ENCODE measurements at regions of chr17 and their contacts with region 1.

Region 1: GRCh38 chr17:48047741-48048383 is at the start of gene NFE2L1:
- DNase-seq: peak; percentile 86 to 99 (median 98)
- ATAC-seq: peak; percentile 98
- H3K4me3 ChIP-seq: peak within 1 kb of the TSS; percentile 78
- H3K4me3 Mint-ChIP-seq: peak within 1 kb of the TSS; percentile 79 to 100 (median 94)
- H3K27ac ChIP-seq: peak within 1 kb of the TSS; percentile 87
- H3K27ac Mint-ChIP-seq: peak within 1 kb of the TSS; percentile 92 to 99 (median 98)
- H3K4me1 ChIP-seq: peaks cover 18 to 19% of the 10 kb centered on the region in 2 donors
- H3K4me1 Mint-ChIP-seq: peaks cover 37 to 68% (median 61%) of the 10 kb centered on the region in 7 donors
- H3K27me3 ChIP-seq: no peaks in the 10 kb centered on the region
- H3K27me3 Mint-ChIP-seq: no peaks in the 10 kb centered on the region
- total RNA-seq, gene NFE2L1: 34.7 to 65.2 (median 49.2) TPM

Region 2: DNA sequence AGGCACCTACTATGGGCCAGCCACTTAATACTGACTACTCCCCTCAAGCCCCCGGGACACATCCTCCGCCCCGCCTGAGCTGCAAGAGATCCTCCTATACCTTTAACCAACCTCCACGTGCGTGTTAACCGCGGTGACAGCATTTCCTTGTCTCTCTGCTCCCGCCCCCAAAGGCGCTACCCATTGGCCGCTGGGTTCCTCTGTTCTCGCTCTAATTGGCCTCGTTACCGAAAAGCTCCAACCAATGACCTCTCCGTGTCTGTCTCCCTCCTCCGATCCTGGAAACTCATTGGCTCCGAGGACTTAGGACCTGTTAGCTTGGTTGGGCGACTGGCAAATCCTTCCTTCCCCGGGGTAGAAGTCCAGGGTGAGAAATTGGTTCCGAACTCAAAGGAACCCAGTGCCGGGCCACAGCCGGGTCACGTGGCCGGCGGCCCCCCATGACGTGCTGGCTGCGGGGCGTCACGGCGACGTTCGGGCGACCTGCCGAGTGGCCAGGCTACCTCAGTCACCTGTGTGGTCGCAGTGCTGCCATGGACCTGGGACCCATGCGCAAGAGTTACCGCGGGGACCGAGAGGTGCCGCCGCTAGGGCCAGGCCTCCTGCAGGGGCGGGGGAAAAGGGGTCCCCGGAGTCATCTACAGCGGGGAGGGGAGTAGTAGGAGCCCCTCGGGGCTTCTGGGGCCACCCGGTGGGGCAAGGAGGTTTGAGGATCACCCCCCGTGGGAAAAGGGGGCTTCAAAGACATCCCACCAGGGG is 106.4 kb before region 1 on chr17 and contains the start of gene PNPO:
- CTCF ChIA-PET with region 1: no interaction called
- POLR2A ChIA-PET with region 1: no interaction called
- intact Hi-C with region 1: loop called in 1 of 2 experiments (anchors 1 kb)
- DNase-seq: peak; percentile 66 to 96 (median 94)
- ATAC-seq: peak; percentile 99
- H3K4me3 ChIP-seq: peak within 1 kb of the TSS; percentile 75
- H3K4me3 Mint-ChIP-seq: peak within 1 kb of the TSS; percentile 75 to 96 (median 88)
- H3K27ac ChIP-seq: peak within 1 kb of the TSS; percentile 90
- H3K27ac Mint-ChIP-seq: peak within 1 kb of the TSS; percentile 34 to 95 (median 86)
- H3K4me1 ChIP-seq: peaks cover 21 to 33% of the 10 kb centered on the region in 2 donors
- H3K4me1 Mint-ChIP-seq: peaks cover 35 to 63% (median 47%) of the 10 kb centered on the region in 7 donors
- H3K27me3 ChIP-seq: no peaks in the 10 kb centered on the region
- H3K27me3 Mint-ChIP-seq: no peaks in the 10 kb centered on the region
- total RNA-seq, gene PNPO: 12.0 to 35.7 (median 14.1) TPM

Region 3: GRCh38 chr17:48037036-48037837 is 10.6 kb before region 1 on chr17 and contains the start of gene COPZ2:
- CTCF ChIA-PET with region 1: interaction called, 8 read pairs
- POLR2A ChIA-PET with region 1: interaction called, 26 read pairs
- intact Hi-C with region 1: loop called (anchors 1 kb)
- DNase-seq: peak; percentile 49 to 68 (median 64)
- ATAC-seq: peak; percentile 97
- H3K4me3 ChIP-seq: peak within 1 kb of the TSS; percentile 67
- H3K4me3 Mint-ChIP-seq: peak within 1 kb of the TSS; percentile 76 to 95 (median 88)
- H3K27ac ChIP-seq: peak within 1 kb of the TSS; percentile 45
- H3K27ac Mint-ChIP-seq: peak within 1 kb of the TSS in 4 of 9 donors; percentile 26 to 61 (median 45)
- H3K4me1 ChIP-seq: peaks cover 0 to 3% of the 10 kb centered on the region in 2 donors
- H3K4me1 Mint-ChIP-seq: peaks cover 0 to 17% (median 12%) of the 10 kb centered on the region in 7 donors
- H3K27me3 ChIP-seq: peaks cover 5 to 6% of the 10 kb centered on the region in 2 donors
- H3K27me3 Mint-ChIP-seq: peaks cover 6 to 55% (median 27%) of the 10 kb centered on the region in 5 donors
- total RNA-seq, gene COPZ2: 0.81 to 5.5 (median 1.9) TPM

Region 4: GRCh38 chr17:48101012-48101720 is 53.3 kb after region 1 on chr17 and contains the start of gene CBX1:
- CTCF ChIA-PET with region 1: interaction called, 4 read pairs
- POLR2A ChIA-PET with region 1: interaction called, 4 read pairs
- intact Hi-C with region 1: loop called (anchors 1 kb)
- DNase-seq: peak; percentile 87 to 95 (median 93)
- ATAC-seq: peak; percentile 98
- H3K4me3 ChIP-seq: peak within 1 kb of the TSS; percentile 78
- H3K4me3 Mint-ChIP-seq: peak within 1 kb of the TSS; percentile 83 to 95 (median 91)
- H3K27ac ChIP-seq: peak within 1 kb of the TSS; percentile 68
- H3K27ac Mint-ChIP-seq: peak within 1 kb of the TSS; percentile 78 to 94 (median 89)
- H3K4me1 ChIP-seq: peaks cover 6 to 11% of the 10 kb centered on the region in 2 donors
- H3K4me1 Mint-ChIP-seq: peaks cover 17 to 60% (median 54%) of the 10 kb centered on the region in 7 donors
- H3K27me3 ChIP-seq: no peaks in the 10 kb centered on the region
- H3K27me3 Mint-ChIP-seq: no peaks in the 10 kb centered on the region
- total RNA-seq, gene CBX1: 16.4 to 56.7 (median 33.5) TPM

Region 5: DNA sequence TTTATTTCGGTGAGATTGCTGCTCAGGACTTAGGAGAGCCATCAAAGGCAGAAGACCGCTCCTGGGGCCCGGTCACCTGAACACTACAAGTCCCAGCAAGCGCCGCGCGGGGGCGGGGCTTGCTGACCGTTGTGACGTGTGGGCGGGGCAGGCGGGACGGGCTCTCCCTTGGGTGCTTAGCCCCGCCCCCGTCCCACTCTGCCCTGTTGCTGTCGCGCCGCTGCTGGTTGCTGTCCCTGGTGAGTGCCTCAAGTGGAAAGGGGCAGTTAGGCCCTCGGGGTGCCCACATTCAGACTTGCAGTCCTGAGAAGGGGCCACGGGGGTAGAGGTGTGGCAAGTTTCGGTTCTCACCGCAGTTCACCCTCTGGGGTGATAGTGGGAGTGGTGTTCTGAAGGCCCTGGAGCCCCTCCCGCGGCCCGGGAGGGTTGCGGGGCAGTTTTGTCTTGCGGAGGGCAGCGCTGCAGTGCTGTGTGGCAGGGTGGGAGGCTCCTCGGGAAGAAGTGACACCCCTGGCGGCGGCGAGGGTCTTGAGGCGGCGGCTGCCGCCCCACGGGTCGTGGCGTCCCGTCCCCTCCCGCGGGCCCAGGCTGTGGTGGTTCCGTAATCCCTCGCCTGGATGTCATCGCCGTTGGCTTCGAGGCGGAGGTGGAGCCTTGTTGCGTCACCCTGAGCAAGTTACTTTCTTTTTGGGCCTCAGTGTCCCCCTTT is 783.1 kb after region 1 on chr17 and contains the start of gene CALCOCO2:
- CTCF ChIA-PET with region 1: no interaction called
- POLR2A ChIA-PET with region 1: no interaction called
- intact Hi-C with region 1: loop called in 1 of 2 experiments (anchors 10 kb)
- DNase-seq: peak; percentile 69 to 88 (median 77)
- ATAC-seq: peak; percentile 96
- H3K4me3 ChIP-seq: peak within 1 kb of the TSS; percentile 97
- H3K4me3 Mint-ChIP-seq: peak within 1 kb of the TSS; percentile 93 to 99 (median 97)
- H3K27ac ChIP-seq: peak within 1 kb of the TSS; percentile 92
- H3K27ac Mint-ChIP-seq: peak within 1 kb of the TSS; percentile 83 to 99 (median 99)
- H3K4me1 ChIP-seq: peaks cover 15 to 29% of the 10 kb centered on the region in 2 donors
- H3K4me1 Mint-ChIP-seq: peaks cover 32 to 63% (median 53%) of the 10 kb centered on the region in 7 donors
- H3K27me3 ChIP-seq: no peaks in the 10 kb centered on the region
- H3K27me3 Mint-ChIP-seq: peaks cover 0 to 2% (median 0%) of the 10 kb centered on the region in 5 donors
- total RNA-seq, gene CALCOCO2: 129 to 208 (median 139) TPM

Measured in naive thymus-derived CD4-positive, alpha-beta T cell (primary cell).